ENCODE measurements at regions of chr3 and their contacts with region 1.

Region 1: GRCh38 chr3:46208167-46208704 is at the start of gene CCR1:
- DNase-seq: peak; percentile 92
- ATAC-seq: peak; percentile 86
- H3K4me3 ChIP-seq: peak within 1 kb of the TSS; percentile 28; the same call in 1 of the 2 replicates
- H3K27ac ChIP-seq: peak within 1 kb of the TSS; percentile 51
- H3K4me1 ChIP-seq: peaks cover 33% of the 10 kb centered on the region
- H3K27me3 ChIP-seq: no peaks in the 10 kb centered on the region
- CTCF ChIP-seq: peak; percentile 66 to 86 (median 75)
- EP300 ChIP-seq: peak; percentile 65 to 82; a peak in 3 of 4 replicates
- POLR2A ChIP-seq: no peak
- RAD21 ChIP-seq: peak; percentile 87
- polyA plus RNA-seq, gene CCR1: 3.4 to 3.7 TPM

Region 2: GRCh38 chr3:45938864-45939263 is 269.4 kb before region 1 on chr3:
- CTCF ChIA-PET with region 1: interaction called, 25 read pairs
- POLR2A ChIA-PET with region 1: no interaction called
- RAD21 ChIA-PET with region 1: interaction called, 8 read pairs
- SMC1A ChIA-PET with region 1: interaction called, 24 read pairs
- in situ Hi-C with region 1: loop called (anchors 10 kb)
- intact Hi-C with region 1: loop called (anchors 2 kb)
- DNase-seq: peak; percentile 66
- ATAC-seq: peak; percentile 97
- H3K4me3 ChIP-seq: no peak overlapping the region
- H3K27ac ChIP-seq: no peak overlapping the region
- H3K4me1 ChIP-seq: peaks cover 7% of the 10 kb centered on the region
- H3K27me3 ChIP-seq: no peaks in the 10 kb centered on the region
- CTCF ChIP-seq: peak; percentile 88 to 94 (median 91); a peak in 5 of 6 replicates
- EP300 ChIP-seq: no peak
- POLR2A ChIP-seq: no peak
- RAD21 ChIP-seq: peak; percentile 94

Region 3: GRCh38 chr3:46089237-46090011 is 118.8 kb before region 1 on chr3:
- CTCF ChIA-PET with region 1: interaction called, 396 read pairs
- POLR2A ChIA-PET with region 1: interaction called, 25 read pairs
- RAD21 ChIA-PET with region 1: interaction called, 268 read pairs
- SMC1A ChIA-PET with region 1: interaction called, 342 read pairs
- in situ Hi-C with region 1: no loop called
- intact Hi-C with region 1: loop called (anchors 1 kb)
- DNase-seq: peak; percentile 78
- ATAC-seq: peak; percentile 90
- H3K4me3 ChIP-seq: no peak overlapping the region
- H3K27ac ChIP-seq: peak overlapping the region; percentile 20; the same call in 1 of the 2 replicates
- H3K4me1 ChIP-seq: peaks cover 58% of the 10 kb centered on the region
- H3K27me3 ChIP-seq: no peaks in the 10 kb centered on the region
- CTCF ChIP-seq: no peak
- EP300 ChIP-seq: peak; percentile 24 to 75; a peak in 2 of 4 replicates
- POLR2A ChIP-seq: no peak
- RAD21 ChIP-seq: 0 out of 2 replicates have a peak, but pooled peaks have one; percentile 5

Region 4: DNA sequence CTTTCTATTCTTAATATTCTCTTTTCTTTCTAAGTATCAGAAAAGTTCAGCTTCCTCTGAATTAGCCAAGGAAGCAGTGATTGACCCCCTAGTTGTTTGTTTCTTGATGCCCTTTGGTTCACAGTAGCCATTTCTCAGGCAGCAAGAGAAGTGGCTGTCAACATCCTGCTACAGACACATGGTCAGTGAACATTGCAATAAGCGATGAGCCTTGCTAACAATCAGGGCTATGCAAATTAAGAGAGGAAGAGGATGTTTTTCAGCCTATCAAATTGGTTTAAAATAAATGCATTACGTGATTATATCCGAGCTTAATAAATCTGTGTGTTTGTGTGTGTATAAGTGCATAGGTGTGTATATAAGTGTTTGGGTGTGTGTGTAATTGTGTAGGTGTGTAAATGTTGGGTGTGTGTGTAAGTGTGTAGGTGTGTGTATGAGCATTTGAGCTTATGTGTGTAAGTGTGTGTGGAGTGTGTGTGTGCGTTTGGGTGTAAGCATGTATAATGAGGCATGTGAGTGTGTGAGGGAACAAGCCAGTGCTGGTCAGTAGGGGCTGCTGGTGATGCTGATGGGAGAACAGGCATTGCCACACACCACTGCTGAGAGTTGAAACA is 102.8 kb before region 1 on chr3:
- CTCF ChIA-PET with region 1: interaction called, 21 read pairs
- POLR2A ChIA-PET with region 1: interaction called, 4 read pairs
- RAD21 ChIA-PET with region 1: interaction called, 5 read pairs
- SMC1A ChIA-PET with region 1: interaction called, 23 read pairs
- in situ Hi-C with region 1: no loop called
- intact Hi-C with region 1: no loop called
- DNase-seq: no peak
- ATAC-seq: peak; percentile 25; the same call in 1 of the 3 replicates
- H3K4me3 ChIP-seq: no peak overlapping the region
- H3K27ac ChIP-seq: no peak overlapping the region
- H3K4me1 ChIP-seq: peaks cover 42% of the 10 kb centered on the region
- H3K27me3 ChIP-seq: no peaks in the 10 kb centered on the region
- CTCF ChIP-seq: no peak
- EP300 ChIP-seq: no peak
- POLR2A ChIP-seq: no peak
- RAD21 ChIP-seq: no peak

Region 5: DNA sequence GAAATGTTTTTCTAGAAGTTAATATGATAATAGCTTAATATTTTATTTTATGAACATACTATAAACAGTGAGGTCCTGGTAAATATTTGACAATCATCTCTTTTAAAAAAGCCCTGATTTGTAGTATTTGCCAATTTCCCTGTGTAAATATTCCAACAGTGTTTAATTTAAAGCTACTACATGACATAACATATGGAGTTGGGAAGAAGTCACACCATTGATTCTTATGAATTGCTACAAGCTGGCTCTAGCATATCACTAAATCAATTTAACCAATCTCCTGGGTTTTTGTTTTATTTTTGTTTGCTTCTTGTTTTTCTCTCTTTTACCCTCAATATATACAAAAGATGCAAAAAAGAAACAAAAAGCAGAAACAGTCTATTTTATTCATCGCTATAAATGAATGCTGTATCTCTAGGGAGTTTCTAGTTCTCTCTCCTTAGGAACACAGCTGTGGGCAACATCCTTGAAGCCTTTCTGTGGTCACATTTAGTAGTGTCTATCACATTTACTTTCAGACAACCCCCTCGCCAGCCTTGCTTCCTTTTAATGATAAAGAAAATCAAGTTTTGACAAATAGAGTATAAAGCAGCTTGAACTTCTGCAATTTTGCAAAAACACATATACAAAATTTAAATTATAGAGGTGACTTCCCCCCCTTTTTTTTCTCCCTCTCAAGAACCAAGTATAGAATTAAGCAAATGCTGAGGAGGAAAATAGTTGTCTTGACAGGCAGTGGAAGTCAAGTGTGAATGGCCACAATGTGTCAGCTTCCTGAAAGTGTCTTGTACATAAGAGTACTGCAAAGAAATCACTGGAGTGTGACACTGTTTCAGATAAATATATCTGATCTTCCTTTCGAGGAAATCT is 21.5 kb before region 1 on chr3:
- CTCF ChIA-PET with region 1: interaction called, 71 read pairs
- POLR2A ChIA-PET with region 1: interaction called, 10 read pairs
- RAD21 ChIA-PET with region 1: interaction called, 51 read pairs
- SMC1A ChIA-PET with region 1: interaction called, 103 read pairs
- in situ Hi-C with region 1: no loop called
- intact Hi-C with region 1: loop called (anchors 1 kb)
- DNase-seq: peak; percentile 87
- ATAC-seq: peak; percentile 94
- H3K4me3 ChIP-seq: 0 out of 2 replicates have a peak overlapping the region, but pooled peaks have one; percentile 6
- H3K27ac ChIP-seq: peak overlapping the region; percentile 71
- H3K4me1 ChIP-seq: peaks cover 33% of the 10 kb centered on the region
- H3K27me3 ChIP-seq: no peaks in the 10 kb centered on the region
- CTCF ChIP-seq: no peak
- EP300 ChIP-seq: peak in 1 of 2 experiments; percentile 54; a peak in 2 of 4 replicates
- POLR2A ChIP-seq: no peak
- RAD21 ChIP-seq: no peak

Region 6: DNA sequence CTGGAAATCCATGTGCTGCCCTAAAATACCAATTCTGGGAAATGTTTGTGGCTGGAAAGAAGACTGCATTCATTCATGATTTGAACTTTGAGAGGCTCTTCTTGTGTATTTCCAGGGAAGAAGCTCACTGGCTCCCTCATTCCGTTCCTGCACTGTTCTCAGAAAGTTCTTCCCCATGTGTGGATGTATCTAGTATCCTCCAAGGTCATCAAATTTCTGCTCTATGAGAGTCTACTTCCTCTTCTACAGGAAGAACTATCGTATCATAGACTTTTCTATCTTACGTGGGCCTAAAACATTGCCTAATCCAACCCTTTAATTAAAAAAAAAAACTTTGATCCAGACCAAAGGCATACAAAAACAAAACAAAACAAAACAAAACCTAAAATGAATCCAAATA is 36.9 kb after region 1 on chr3:
- CTCF ChIA-PET with region 1: no interaction called
- POLR2A ChIA-PET with region 1: no interaction called
- RAD21 ChIA-PET with region 1: no interaction called
- SMC1A ChIA-PET with region 1: no interaction called
- in situ Hi-C with region 1: no loop called
- intact Hi-C with region 1: no loop called
- DNase-seq: no peak
- ATAC-seq: no peak
- H3K4me3 ChIP-seq: no peak overlapping the region
- H3K27ac ChIP-seq: no peak overlapping the region
- H3K4me1 ChIP-seq: peaks cover 3% of the 10 kb centered on the region; the same call in 1 of the 2 replicates
- H3K27me3 ChIP-seq: peaks cover 0 to 4% of the 10 kb centered on the region in 2 experiments; a peak in 2 of 4 replicates
- CTCF ChIP-seq: no peak
- EP300 ChIP-seq: no peak
- POLR2A ChIP-seq: no peak
- RAD21 ChIP-seq: no peak

Region 7: DNA sequence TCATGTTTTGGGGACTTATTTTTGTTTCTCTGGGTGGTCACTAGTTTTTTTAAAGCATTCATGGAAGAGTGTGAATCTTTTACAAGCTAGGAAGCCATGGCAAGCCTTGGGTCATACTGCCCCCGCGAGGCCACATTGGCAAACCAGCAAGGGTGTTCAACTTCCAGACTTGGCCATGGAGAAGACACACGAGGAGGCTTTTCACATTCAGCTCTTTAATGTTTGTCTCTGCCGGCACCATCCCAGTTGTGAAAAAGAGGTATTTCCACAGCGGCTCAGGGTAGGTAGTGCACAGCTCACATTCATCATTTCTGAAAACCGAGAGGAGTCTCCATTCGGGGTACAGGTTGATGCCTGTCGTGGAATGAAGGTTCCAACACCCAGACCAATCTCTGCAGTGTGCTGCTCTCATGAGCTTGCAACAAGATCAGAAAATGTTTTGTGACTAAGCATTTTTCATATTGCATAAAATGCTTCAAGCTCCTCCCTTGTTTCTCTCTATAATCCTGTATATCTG is 170.2 kb after region 1 on chr3:
- CTCF ChIA-PET with region 1: interaction called, 555 read pairs
- POLR2A ChIA-PET with region 1: interaction called, 3 read pairs
- RAD21 ChIA-PET with region 1: interaction called, 421 read pairs
- SMC1A ChIA-PET with region 1: interaction called, 434 read pairs
- in situ Hi-C with region 1: loop called (anchors 5 kb)
- intact Hi-C with region 1: no loop called
- DNase-seq: no peak
- ATAC-seq: peak; percentile 90
- H3K4me3 ChIP-seq: no peak overlapping the region
- H3K27ac ChIP-seq: no peak overlapping the region
- H3K4me1 ChIP-seq: peaks cover 12% of the 10 kb centered on the region
- H3K27me3 ChIP-seq: peaks cover 0 to 3% of the 10 kb centered on the region in 2 experiments; a peak in 2 of 4 replicates
- CTCF ChIP-seq: peak; percentile 77 to 80 (median 79)
- EP300 ChIP-seq: no peak
- POLR2A ChIP-seq: no peak
- RAD21 ChIP-seq: peak; percentile 92